Prostate gland (tissue), 2 donors: ENCODE measurements at regions of chr1 and their contacts with region 1.

Region 1: DNA sequence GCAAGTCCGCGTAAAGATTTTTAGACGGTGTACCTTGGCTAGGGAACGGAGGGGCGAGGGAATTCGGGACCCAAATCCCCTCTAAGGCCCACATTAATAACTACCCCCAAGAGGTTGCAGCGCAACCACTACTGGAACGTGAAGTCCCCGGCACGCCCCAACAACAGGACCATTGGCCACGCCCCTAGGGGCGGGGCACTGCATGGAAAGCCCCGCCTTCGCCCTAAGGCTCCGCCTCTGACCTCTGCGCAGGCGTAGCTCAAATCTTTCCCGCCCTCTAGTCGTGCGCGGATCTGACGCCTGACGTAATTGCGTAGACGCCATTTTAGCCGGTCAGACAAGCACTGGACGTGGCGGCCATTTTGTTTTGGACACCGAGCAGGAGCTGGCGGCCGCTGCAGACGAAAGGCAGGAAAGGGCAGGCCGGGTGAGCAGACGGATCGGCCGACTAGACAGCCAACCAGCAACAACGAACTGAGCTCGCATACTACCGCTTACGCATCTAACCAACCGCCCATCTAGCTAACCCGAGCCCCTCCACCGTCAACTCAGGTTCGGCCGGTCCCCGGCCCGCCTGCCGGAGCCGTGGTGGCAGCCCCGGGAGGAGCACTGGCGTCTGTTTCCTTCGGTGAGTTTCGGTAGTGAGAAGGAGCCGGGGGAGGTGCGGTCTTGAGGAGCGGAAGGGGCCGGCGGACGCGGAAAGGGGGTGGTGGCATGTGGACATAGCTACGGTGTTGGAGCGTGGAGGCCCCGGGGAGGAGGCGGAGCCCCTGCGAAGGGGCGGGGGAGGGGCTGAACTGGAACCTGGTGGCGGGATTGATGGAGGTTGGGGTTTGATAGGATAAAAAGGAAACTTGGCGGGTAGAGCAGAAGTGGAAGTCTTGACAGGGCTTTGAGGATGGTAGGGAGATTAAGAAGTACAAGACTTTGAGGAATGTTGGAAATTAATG is at the start of gene CHTOP:
- DNase-seq: peak; percentile 98
- H3K4me3 ChIP-seq: peak within 1 kb of the TSS; percentile 76 to 93
- H3K27ac ChIP-seq: peak within 1 kb of the TSS; percentile 99 to 100
- H3K4me1 ChIP-seq: no peaks in the 10 kb centered on the region
- H3K27me3 ChIP-seq: no peaks in the 10 kb centered on the region
- CTCF ChIP-seq: peak in 2 of 4 experiments; percentile 26 to 44
- POLR2A ChIP-seq: peak; percentile 94
- total RNA-seq, gene CHTOP: 60.6 to 74.4 TPM

Region 2: GRCh38 chr1:153312570-153313193 is 321.3 kb before region 1 on chr1 and contains the start of gene PGLYRP3:
- intact Hi-C with region 1: no loop called
- DNase-seq: no peak
- H3K4me3 ChIP-seq: no peak within 1 kb of the TSS
- H3K27ac ChIP-seq: no peak within 1 kb of the TSS
- H3K4me1 ChIP-seq: no peaks in the 10 kb centered on the region
- H3K27me3 ChIP-seq: no peaks in the 10 kb centered on the region
- CTCF ChIP-seq: no peak
- POLR2A ChIP-seq: no peak
- total RNA-seq, gene PGLYRP3: not detected

Region 3: DNA sequence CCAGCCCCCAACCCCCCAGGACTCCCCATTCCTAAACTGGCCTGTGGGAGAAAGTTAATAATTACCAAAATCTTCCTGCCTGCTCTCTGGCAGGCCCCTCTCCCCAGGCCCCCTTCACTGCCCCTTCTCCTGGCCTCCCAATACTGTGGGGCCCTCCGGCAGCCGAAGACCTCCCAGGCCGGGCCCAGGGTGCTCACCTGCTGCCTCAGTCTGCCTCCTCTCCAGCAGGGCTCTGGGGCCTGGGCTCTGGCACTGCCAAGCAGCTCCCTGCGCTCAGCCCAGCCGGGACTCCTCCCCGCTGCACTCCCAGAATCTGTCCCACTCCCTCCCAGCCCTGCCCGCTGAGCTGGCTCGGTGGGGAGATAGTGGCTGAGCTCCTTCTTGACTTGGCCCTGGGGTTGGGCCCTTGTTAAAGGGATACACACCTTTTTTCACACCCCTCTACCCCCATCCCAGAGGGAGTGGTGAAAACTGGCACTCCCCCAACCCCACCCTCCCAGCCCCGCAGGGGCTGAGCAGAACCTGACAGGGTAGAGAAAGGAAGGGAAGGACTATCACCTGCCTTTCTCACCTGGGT is 21.1 kb before region 1 on chr1 and contains the start of gene S100A16:
- intact Hi-C with region 1: loop called (anchors 2 kb)
- DNase-seq: peak; percentile 73
- H3K4me3 ChIP-seq: peak within 1 kb of the TSS; percentile 46 to 51
- H3K27ac ChIP-seq: peak within 1 kb of the TSS; percentile 80 to 91
- H3K4me1 ChIP-seq: peaks cover 4% of the 10 kb centered on the region
- H3K27me3 ChIP-seq: no peaks in the 10 kb centered on the region
- CTCF ChIP-seq: peak in 1 of 4 experiments; percentile 17
- POLR2A ChIP-seq: peak; percentile 93
- total RNA-seq, gene S100A16: 78.4 to 165 TPM

Region 4: DNA sequence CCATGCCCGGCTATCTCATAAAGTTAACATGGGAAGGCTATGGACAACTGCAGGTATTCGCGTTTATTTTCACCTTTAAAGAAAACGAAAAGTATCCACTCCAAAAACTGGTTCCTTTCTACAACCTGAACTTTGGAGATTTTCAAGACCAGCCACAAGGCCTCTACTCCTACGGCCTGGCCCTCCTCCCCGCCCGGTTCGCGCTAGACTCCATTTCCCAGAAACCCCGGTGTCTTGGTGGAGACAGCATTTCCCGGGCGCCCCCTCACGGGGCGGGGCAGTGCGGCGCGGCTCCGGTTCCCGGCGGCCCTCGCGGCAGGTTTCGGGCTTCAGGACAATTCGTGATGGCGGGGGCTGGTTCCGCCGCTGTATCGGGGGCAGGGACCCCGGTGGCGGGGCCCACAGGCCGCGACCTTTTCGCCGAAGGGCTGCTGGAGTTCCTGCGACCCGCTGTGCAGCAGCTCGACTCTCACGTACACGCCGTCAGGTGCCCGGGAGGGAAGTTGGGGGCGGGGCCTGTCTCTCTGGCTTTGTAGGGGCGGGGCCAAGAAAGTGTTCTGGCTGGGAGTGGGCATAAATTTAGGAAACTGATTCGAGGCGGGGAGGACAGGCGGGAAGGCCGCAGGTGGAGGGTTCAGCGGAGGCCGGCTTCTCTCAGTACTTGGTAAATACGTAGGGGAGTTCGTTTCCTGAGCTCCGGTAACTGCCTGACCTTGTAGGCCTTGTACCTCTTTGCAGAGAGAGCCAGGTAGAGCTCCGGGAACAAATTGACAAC is 24.6 kb after region 1 on chr1 and contains the start of gene SNAPIN:
- intact Hi-C with region 1: loop called (anchors 2 kb)
- DNase-seq: peak; percentile 87
- H3K4me3 ChIP-seq: peak within 1 kb of the TSS; percentile 67 to 69
- H3K27ac ChIP-seq: peak within 1 kb of the TSS; percentile 96
- H3K4me1 ChIP-seq: no peaks in the 10 kb centered on the region
- H3K27me3 ChIP-seq: no peaks in the 10 kb centered on the region
- CTCF ChIP-seq: peak in 2 of 4 experiments; percentile 31 to 39
- POLR2A ChIP-seq: peak; percentile 61
- total RNA-seq, gene SNAPIN: 64.9 to 73.0 TPM